Dendritic cell treated with granulocyte-macrophage colony-stimulating factor and Interleukin-4, amounts not matched to agents 40 ng/mL and 50 ng/mL, for 4 days (primary cell): ENCODE measurements at regions of chr10 and their contacts with region 1.

Region 1: DNA sequence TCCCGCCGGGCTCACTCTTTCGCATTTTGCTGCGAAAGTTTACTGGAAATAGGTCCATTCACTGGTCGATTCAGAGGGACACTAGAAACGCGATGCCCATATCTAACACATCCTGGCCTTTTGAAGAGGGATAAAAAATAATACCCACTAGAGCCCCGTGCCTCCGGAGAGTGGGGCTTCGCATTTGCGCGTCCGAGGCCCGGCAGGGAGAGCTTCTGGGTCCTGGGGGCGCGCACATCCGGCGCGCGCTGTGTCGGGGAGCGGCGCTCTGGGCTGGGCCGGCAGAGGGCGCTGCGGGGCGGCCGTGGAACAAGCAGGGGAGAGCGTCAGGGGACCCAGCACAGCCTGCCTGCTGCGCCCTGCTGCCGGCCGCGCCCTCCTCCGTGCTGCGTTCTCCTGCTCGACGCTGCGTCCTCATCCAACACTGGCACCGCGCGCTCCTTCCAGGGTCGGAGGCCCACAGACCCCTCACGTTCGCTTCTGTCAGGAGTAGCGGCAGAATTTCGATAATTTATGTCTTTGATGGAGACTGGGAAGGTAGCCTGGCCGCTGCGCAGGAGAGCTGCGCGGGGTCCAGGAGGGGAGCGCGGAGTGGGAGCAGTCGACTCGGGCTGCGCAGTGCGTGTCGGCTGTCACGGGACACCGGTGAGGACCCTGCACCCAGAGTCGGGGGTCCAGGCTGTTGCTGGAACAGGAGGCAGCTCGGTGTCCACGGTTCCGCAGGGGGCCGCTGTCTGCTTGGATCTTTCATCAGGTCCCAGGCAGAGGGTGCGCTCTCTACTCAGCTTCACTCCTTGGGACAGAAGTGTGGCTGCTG is 41.5 kb upstream of the ZNF32 start:
- H3K4me3 Mint-ChIP-seq: peak overlapping the region; percentile 78
- H3K27ac Mint-ChIP-seq: peak overlapping the region; percentile 85
- H3K4me1 Mint-ChIP-seq: peaks cover 22% of the 10 kb centered on the region
- H3K27me3 Mint-ChIP-seq: peaks cover 52% of the 10 kb centered on the region

Region 2: DNA sequence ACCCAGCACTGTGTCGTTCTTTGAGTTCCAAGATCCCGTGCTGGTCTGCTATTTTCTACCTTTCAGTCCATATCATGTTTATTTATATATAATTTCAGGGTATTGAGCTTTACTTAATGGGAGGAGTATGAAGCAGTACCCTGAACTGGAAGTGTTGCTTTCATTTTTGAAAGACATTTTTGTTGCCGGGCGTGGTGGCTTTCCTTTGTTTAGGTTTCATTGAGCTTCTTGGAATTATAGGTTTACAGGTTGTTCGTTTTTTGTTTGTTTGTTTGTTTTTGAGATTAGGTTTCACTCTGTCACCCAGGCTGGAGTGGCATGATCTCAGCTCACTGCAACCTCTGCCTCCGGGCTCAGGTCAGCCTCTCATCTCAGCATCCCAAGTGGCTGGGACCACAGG is 245.8 kb before region 1 on chr10:
- intact Hi-C with region 1: no loop called
- H3K4me3 Mint-ChIP-seq: no peak overlapping the region
- H3K27ac Mint-ChIP-seq: no peak overlapping the region
- H3K4me1 Mint-ChIP-seq: peaks cover 6% of the 10 kb centered on the region
- H3K27me3 Mint-ChIP-seq: no peaks in the 10 kb centered on the region

Region 3: GRCh38 chr10:43825421-43825820 is 135.3 kb after region 1 on chr10:
- intact Hi-C with region 1: no loop called
- H3K4me3 Mint-ChIP-seq: no peak overlapping the region
- H3K27ac Mint-ChIP-seq: no peak overlapping the region
- H3K4me1 Mint-ChIP-seq: no peaks in the 10 kb centered on the region
- H3K27me3 Mint-ChIP-seq: no peaks in the 10 kb centered on the region

Region 4: GRCh38 chr10:44310762-44311562 is 620.8 kb after region 1 on chr10:
- intact Hi-C with region 1: loop called (anchors 5 kb)
- H3K4me3 Mint-ChIP-seq: no peak overlapping the region
- H3K27ac Mint-ChIP-seq: no peak overlapping the region
- H3K4me1 Mint-ChIP-seq: peaks cover 7% of the 10 kb centered on the region
- H3K27me3 Mint-ChIP-seq: peaks cover 16% of the 10 kb centered on the region

Region 5: DNA sequence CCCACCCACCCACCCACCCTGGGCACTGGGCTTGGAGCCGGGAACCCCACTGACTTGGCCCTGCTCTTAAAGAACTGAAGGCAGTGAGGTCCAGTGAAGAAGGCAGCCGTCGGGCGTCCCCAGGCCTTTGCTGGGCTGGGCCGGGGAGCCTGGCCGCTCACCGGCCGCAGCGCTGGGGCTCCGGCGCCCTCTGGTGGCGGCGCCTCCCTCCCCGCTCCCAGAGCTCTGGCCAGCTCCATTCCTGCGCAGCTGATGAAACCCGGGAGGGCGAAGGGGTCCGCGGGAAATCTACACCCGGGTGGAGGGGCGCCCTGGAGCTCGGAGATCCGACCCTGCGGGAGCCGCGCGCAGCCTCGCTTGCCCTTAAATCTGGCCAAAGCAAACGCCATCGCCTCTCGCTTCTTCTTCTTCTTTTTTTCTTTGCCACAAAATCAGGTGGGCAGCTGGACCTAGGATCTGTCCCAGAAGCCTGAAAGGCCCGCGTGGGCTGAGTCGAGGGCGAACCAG is 696.4 kb after region 1 on chr10:
- intact Hi-C with region 1: loop called (anchors 5 kb)
- H3K4me3 Mint-ChIP-seq: no peak overlapping the region
- H3K27ac Mint-ChIP-seq: no peak overlapping the region
- H3K4me1 Mint-ChIP-seq: no peaks in the 10 kb centered on the region
- H3K27me3 Mint-ChIP-seq: peaks cover 60% of the 10 kb centered on the region

Region 6: DNA sequence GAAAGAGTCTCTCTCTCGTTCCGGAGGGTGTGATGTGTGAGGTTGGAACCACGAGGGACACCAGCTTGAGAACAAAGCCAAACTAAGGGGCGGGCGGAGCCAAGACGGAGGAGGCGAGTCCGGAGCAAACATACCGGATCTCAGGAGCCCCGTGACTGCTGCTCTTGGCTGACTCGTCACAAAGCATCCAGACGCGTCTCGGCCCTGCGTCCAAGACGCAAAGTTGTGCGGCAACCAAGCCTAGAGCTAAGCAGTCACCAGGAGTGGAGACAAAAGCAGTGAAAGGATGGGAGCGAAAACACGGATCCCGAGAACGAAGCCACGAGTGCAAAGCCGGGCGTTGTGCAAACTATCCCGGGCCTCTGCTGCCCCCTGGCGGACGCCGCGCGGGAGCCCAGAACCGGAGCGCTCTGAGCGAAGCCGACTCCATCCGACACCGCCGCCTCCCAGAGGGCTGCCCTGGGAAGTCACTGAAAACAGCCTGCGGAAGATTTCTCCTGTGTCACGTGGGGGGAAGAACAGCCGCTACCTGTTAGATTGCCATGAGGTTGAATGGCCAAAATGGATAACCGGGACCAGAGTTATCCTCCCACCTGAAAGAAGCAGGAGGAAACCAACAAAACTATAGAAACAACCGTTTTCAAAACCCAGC is 1174.6 kb after region 1 on chr10:
- intact Hi-C with region 1: loop called (anchors 5 kb)
- H3K4me3 Mint-ChIP-seq: peak overlapping the region; percentile 89
- H3K27ac Mint-ChIP-seq: peak overlapping the region; percentile 57
- H3K4me1 Mint-ChIP-seq: peaks cover 19% of the 10 kb centered on the region
- H3K27me3 Mint-ChIP-seq: peaks cover 58% of the 10 kb centered on the region